Dendritic cell treated with granulocyte-macrophage colony-stimulating factor and Interleukin-4, amounts not matched to agents 40 ng/mL and 50 ng/mL, for 4 days (primary cell): ENCODE measurements at regions of chr4 and their contacts with region 1.

Region 1: DNA sequence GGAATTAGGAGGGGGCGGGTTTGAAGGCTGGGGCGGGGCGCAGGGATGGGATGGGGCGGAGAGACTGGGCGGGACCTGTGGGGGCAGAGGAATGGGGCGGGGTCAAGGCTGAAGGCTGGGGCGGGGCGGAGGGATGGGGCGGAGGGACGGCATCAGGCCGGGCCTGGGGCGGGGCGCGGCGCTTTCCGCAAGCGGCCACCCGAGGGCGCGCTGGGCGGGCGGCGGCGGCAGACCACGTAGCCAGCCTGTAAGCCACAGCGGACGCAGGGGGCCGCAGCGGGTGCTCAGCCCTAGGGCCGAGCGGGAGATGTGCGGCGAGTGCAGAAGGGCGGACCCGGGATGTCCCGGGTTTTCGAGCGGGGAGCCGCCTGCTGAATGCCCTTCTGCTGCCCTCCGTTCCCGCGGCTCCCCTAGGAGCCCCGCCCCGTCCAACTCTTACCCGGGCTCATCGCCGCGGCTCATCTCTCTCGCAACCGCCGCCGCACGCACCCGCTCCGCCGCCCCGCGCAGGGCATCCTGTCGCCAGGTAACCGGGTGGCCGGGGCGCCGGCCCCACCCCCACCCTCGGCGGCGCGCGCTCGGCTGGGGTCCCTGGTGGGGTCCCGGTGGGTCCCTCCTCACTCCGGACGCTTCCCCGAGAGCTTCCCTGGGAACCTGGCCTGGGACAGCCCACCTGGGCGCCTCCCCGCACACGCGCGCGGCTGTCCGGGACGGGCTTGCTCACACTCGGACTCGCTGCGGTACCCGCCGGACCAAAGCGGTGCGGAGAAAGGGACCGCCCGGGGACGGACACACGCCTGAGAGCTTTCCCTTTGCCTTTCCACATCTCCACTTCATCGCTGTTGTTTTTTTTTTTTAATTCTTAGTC is at the start of gene CCDC110:
- H3K4me3 Mint-ChIP-seq: peak within 1 kb of the TSS; percentile 73
- H3K27ac Mint-ChIP-seq: peak within 1 kb of the TSS; percentile 32
- H3K4me1 Mint-ChIP-seq: peaks cover 6% of the 10 kb centered on the region
- H3K27me3 Mint-ChIP-seq: peaks cover 59% of the 10 kb centered on the region

Region 2: GRCh38 chr4:185395956-185396723 is 75.3 kb before region 1 on chr4:
- intact Hi-C with region 1: loop called (anchors 1 kb)
- H3K4me3 Mint-ChIP-seq: peak overlapping the region; percentile 84
- H3K27ac Mint-ChIP-seq: peak overlapping the region; percentile 84
- H3K4me1 Mint-ChIP-seq: peaks cover 23% of the 10 kb centered on the region
- H3K27me3 Mint-ChIP-seq: peaks cover 7% of the 10 kb centered on the region

Region 3: GRCh38 chr4:185425647-185426352 is 45.7 kb before region 1 on chr4 and contains the start of gene UFSP2:
- intact Hi-C with region 1: loop called (anchors 1 kb)
- H3K4me3 Mint-ChIP-seq: peak within 1 kb of the TSS; percentile 79
- H3K27ac Mint-ChIP-seq: peak within 1 kb of the TSS; percentile 94
- H3K4me1 Mint-ChIP-seq: peaks cover 36% of the 10 kb centered on the region
- H3K27me3 Mint-ChIP-seq: peaks cover 28% of the 10 kb centered on the region

Region 4: GRCh38 chr4:185597532-185598188 is 126.2 kb after region 1 on chr4:
- intact Hi-C with region 1: loop called (anchors 10 kb)
- H3K4me3 Mint-ChIP-seq: no peak overlapping the region
- H3K27ac Mint-ChIP-seq: no peak overlapping the region
- H3K4me1 Mint-ChIP-seq: no peaks in the 10 kb centered on the region
- H3K27me3 Mint-ChIP-seq: peaks cover 21% of the 10 kb centered on the region

Region 5: DNA sequence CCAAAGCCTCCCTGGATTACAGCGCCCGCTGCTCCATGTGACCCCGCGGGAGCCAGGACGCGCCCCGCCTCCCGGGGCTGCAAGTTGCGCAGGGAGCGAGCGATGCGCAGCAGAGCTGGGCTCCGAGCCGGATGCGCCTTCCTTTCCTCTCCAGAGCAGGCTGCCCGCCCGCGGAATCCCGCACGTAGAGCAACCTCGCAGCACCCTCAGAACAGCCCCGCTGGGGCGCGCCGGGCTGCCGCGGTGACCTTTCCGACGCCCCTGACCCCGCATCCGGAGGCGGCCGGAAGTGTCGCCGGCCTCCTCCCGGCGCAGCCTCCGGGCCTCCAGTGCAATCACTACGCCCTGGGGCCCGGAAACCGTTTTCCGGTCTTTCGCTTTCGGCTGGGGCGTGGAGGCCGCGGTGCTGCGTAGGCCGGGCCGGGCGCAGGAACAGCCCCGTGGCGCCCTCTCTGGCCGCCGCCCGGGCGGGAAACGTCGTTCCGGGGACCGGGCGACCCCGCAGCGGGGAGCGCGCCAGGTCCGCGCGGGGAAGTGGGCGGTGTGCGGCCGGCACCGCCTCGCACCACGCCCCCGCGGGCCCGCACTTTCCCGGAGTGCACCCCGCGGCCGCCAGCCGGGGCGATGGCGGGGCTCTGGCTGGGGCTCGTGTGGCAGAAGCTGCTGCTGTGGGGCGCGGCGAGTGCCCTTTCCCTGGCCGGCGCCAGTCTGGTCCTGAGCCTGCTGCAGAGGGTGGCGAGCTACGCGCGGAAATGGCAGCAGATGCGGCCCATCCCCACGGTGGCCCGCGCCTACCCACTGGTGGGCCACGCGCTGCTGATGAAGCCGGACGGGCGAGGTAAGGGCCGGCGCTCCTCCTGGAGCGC is 720.0 kb after region 1 on chr4 and contains the start of gene CYP4V2:
- intact Hi-C with region 1: loop called (anchors 5 kb)
- H3K4me3 Mint-ChIP-seq: peak within 1 kb of the TSS; percentile 97
- H3K27ac Mint-ChIP-seq: peak within 1 kb of the TSS; percentile 96
- H3K4me1 Mint-ChIP-seq: peaks cover 18% of the 10 kb centered on the region
- H3K27me3 Mint-ChIP-seq: no peaks in the 10 kb centered on the region